H1 (cell line): ENCODE measurements at regions of chr15 and their contacts with region 1.

Region 1: GRCh38 chr15:79923515-79924395 is 26.9 kb upstream of the MTHFS start:
- DNase-seq: peak; percentile 99 to 100
- H3K4me3 ChIP-seq: peak overlapping the region; percentile 87 to 95 (median 90)
- H3K27ac ChIP-seq: peak overlapping the region; percentile 81
- H3K4me1 ChIP-seq: peaks cover 0 to 18% (median 10%) of the 10 kb centered on the region in 4 experiments; a peak in 4 of 7 replicates
- H3K27me3 ChIP-seq: no peaks in the 10 kb centered on the region
- CTCF ChIP-seq: 0 out of 4 replicates have a peak, but pooled peaks of 1 of the 3 experiments have one; percentile 3
- EP300 ChIP-seq: no peak
- POLR2A ChIP-seq: peak; percentile 98
- RAD21 ChIP-seq: no peak

Region 2: GRCh38 chr15:79896637-79897379 is 26.9 kb before region 1 on chr15 and contains the start of gene MTHFS:
- CTCF ChIA-PET with region 1: interaction called, 3 read pairs
- POLR2A ChIA-PET with region 1: interaction called, 42 read pairs
- DNase-seq: peak; percentile 49 to 87
- H3K4me3 ChIP-seq: peak within 1 kb of the TSS; percentile 62 to 75 (median 72)
- H3K27ac ChIP-seq: peak within 1 kb of the TSS; percentile 92
- H3K4me1 ChIP-seq: peaks cover 0 to 3% (median 0%) of the 10 kb centered on the region in 4 experiments; a peak in 2 of 7 replicates
- H3K27me3 ChIP-seq: no peaks in the 10 kb centered on the region
- CTCF ChIP-seq: peak; percentile 38 to 50 (median 49)
- EP300 ChIP-seq: peak in 1 of 2 experiments; percentile 38; a peak in 1 of 3 replicates
- POLR2A ChIP-seq: peak; percentile 81 to 92
- RAD21 ChIP-seq: peak; percentile 42 to 53
- total RNA-seq, gene MTHFS: 36.2 and 37.2 TPM in 2 replicates

Region 3: GRCh38 chr15:79904271-79904670 is 19.5 kb before region 1 on chr15:
- CTCF ChIA-PET with region 1: no interaction called
- POLR2A ChIA-PET with region 1: interaction called, 42 read pairs
- DNase-seq: no peak
- H3K4me3 ChIP-seq: no peak overlapping the region
- H3K27ac ChIP-seq: no peak overlapping the region
- H3K4me1 ChIP-seq: no peaks in the 10 kb centered on the region
- H3K27me3 ChIP-seq: no peaks in the 10 kb centered on the region
- CTCF ChIP-seq: no peak
- EP300 ChIP-seq: no peak
- POLR2A ChIP-seq: no peak
- RAD21 ChIP-seq: no peak

Region 4: GRCh38 chr15:80041494-80042253 is 117.9 kb after region 1 on chr15:
- CTCF ChIA-PET with region 1: no interaction called
- POLR2A ChIA-PET with region 1: no interaction called
- DNase-seq: no peak
- H3K4me3 ChIP-seq: no peak overlapping the region
- H3K27ac ChIP-seq: no peak overlapping the region
- H3K4me1 ChIP-seq: peaks cover 0 to 5% (median 1%) of the 10 kb centered on the region in 4 experiments; a peak in 3 of 7 replicates
- H3K27me3 ChIP-seq: no peaks in the 10 kb centered on the region
- CTCF ChIP-seq: no peak
- EP300 ChIP-seq: no peak
- POLR2A ChIP-seq: no peak
- RAD21 ChIP-seq: no peak